ENCODE measurements at regions of chr15 and their contacts with region 1.

Region 1: GRCh38 chr15:74615508-74616365 is at the start of gene CLK3:
- DNase-seq: peak; percentile 97
- total RNA-seq, gene CLK3: 53.1 TPM

Region 2: GRCh38 chr15:74460871-74461846 is 154.6 kb before region 1 on chr15 and contains the start of gene UBL7:
- intact Hi-C with region 1: loop called (anchors 2 kb)
- DNase-seq: peak; percentile 99
- total RNA-seq, gene UBL7: 48.3 TPM

Region 3: GRCh38 chr15:74723754-74724334 is 108.1 kb after region 1 on chr15:
- intact Hi-C with region 1: no loop called
- DNase-seq: no peak